ENCODE measurements at regions of chr2 and their contacts with region 1.

Region 1: GRCh38 chr2:187138265-187138664 is 289.3 kb upstream of the ZSWIM2 start:
- DNase-seq: peak; percentile 67
- ATAC-seq: peak; percentile 87

Region 2: GRCh38 chr2:186887107-186888090 is 250.9 kb before region 1 on chr2:
- intact Hi-C with region 1: loop called (anchors 10 kb)
- DNase-seq: peak; percentile 74
- ATAC-seq: peak; percentile 95

Region 3: GRCh38 chr2:187155476-187155875 is 17.2 kb after region 1 on chr2:
- intact Hi-C with region 1: no loop called
- DNase-seq: no peak
- ATAC-seq: no peak

Region 4: GRCh38 chr2:187299122-187299906 is 161.0 kb after region 1 on chr2:
- intact Hi-C with region 1: loop called (anchors 2 kb)
- DNase-seq: no peak
- ATAC-seq: peak; percentile 42

Region 5: DNA sequence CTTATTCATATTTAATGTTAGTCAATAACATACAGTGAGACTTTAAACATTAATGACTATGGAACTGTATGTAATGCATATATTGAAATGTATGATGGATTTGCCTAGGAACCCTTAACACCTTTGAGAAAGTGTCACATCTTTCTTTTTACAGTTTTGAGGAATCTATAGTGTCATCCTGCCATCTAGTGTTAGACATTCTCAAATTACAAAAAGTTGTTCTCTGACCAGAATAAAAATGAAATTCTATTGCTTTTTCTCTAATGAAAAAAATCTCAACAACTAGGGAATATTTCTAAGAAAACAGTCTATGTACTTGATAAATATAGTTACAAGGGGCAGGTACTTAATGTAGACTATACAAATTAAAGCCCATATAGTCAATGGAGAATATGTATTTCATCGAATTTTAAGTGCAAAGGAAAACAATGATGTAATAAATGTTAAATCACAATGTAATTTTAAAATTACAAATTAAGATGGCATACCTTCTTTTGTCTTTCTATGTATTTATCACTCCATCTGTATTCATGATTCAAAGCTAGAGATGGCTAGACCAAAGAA is 314.9 kb after region 1 on chr2:
- intact Hi-C with region 1: loop called (anchors 10 kb)
- DNase-seq: no peak
- ATAC-seq: no peak